ENCODE measurements at regions of chr6 and their contacts with region 1.

Region 1: DNA sequence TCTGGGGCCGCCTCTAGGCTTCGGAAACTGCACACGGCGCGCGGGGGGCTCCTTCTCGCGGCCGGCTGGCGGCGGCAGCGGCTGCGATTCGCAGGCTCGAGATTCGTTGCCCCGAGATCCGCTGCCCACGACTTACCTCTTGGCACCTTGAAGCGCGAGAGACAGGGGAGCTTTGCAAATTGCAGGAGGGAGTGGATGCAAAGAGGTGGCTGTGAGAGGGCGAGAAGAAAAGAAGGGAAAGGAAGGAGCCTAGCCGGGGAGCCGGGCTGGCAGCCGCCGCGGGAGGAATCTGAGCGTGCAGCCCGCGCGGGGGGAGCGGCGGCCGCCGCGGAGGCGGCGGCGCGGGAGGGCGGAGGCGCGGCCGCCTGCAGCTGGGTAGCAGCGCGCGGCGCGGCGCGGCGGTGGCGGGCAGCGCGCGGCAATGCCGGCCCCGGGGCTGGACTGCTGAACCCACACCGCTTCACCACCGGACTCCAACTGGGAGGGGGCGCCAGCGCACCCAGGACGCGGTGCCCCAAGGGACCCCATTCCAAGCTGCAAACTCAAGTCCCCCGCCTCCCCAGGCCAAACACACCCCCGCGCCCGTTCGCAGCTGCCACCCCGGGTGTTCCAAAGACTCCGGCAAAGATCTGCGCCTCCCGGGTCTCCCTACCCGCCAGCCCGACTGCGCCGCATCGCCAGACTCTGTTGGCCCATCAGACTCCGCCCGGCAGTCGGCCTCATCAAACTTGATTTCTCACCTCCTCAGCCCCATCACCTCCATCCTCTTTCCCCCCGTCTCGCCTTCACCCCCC is 44.2 kb upstream of the SUPT3H start:
- DNase-seq: peak; percentile 75
- ATAC-seq: peak; percentile 37
- H3K4me3 Mint-ChIP-seq: peak overlapping the region; percentile 95
- H3K27ac Mint-ChIP-seq: peak overlapping the region; percentile 91
- H3K4me1 Mint-ChIP-seq: peaks cover 42% of the 10 kb centered on the region
- H3K27me3 Mint-ChIP-seq: peaks cover 27% of the 10 kb centered on the region

Region 2: GRCh38 chr6:45265246-45265645 is 156.7 kb before region 1 on chr6:
- CTCF ChIA-PET with region 1: no interaction called
- DNase-seq: no peak
- ATAC-seq: no peak
- H3K4me3 Mint-ChIP-seq: no peak overlapping the region
- H3K27ac Mint-ChIP-seq: no peak overlapping the region
- H3K4me1 Mint-ChIP-seq: peaks cover 5% of the 10 kb centered on the region
- H3K27me3 Mint-ChIP-seq: no peaks in the 10 kb centered on the region

Region 3: DNA sequence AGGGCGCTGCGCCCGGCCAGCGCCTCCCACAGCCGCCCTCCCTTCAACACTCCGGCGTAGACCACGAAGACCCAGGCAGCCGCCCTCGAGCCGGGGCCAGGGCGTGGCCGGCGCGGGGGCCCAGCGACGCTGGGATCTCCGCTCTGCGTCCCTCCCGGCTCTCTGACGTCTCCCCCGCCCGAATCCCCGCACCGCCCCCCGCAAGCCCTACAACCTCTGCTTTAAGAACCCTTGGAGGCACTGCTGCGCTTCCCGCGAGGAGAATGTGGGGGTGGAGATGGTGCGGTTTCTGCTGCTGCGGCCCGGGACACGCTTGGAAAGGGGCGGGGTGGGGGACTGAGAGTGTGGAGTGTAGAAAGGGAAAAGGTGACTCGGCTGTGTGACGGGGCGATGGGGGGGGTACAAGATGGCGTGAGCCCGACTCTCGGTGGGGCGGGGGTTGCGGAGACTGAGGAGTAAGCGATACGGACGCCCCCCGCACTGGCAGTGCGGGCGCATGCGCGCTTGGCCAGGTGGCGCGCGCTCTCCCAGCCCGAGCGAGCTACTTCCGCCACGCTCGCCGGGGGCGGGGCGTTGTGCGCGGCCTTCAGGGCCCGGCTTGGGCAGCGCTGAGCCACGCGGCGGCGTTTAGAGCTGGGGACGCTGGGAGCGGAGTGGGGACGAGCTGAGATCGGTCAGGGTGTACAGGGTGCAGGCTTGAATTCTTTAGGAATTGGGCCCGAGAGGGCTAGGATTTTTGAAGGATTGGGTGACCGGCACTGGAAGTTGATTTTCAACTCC is 44.2 kb before region 1 on chr6 and contains the start of gene SUPT3H:
- CTCF ChIA-PET with region 1: interaction called, 14 read pairs
- DNase-seq: peak; percentile 93
- ATAC-seq: peak; percentile 90
- H3K4me3 Mint-ChIP-seq: peak within 1 kb of the TSS; percentile 98
- H3K27ac Mint-ChIP-seq: peak within 1 kb of the TSS; percentile 99
- H3K4me1 Mint-ChIP-seq: peaks cover 15% of the 10 kb centered on the region
- H3K27me3 Mint-ChIP-seq: no peaks in the 10 kb centered on the region
- total RNA-seq, gene SUPT3H: 8.2 to 11.7 TPM

Region 4: DNA sequence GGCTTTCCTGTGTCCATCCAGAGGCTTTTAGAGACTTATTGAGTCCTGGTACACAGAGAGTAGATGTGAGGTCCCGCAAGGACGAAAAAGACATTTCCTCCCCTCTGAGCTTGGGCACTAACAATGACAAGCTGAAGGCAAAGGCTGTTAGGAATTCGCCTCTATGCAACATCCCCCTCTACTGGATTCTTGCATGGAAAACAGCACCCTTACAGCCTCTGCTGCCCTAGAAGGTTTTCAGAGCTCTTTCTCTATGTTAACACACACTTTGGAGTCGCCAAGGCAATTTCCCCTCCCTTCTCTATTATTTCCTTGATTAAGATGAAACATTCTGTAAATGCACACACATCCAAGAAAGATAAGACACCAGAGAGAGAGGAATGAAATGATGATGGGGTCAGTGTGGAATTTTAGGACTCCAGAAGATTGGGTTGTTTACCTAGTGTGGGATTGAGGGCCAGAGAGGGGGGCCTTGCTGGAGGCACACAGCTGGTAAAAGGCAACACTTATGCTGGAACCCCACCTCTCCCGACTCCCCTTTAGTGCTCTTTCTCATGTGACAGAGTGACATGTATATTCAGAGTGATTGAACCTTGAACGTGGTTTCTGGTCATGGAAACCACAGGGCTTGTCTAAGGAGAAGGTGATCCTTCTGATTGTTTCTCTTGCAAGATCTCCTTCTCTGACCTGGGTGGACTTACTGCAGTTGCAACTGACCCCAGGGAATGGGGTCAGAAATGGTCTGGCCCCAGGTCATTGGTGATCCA is 293.0 kb after region 1 on chr6:
- CTCF ChIA-PET with region 1: interaction called, 31 read pairs
- DNase-seq: peak; percentile 71
- ATAC-seq: peak; percentile 63
- H3K4me3 Mint-ChIP-seq: no peak overlapping the region
- H3K27ac Mint-ChIP-seq: peak overlapping the region; percentile 71
- H3K4me1 Mint-ChIP-seq: peaks cover 57% of the 10 kb centered on the region
- H3K27me3 Mint-ChIP-seq: no peaks in the 10 kb centered on the region